Activated CD4-positive, alpha-beta T cell treated with anti-CD3 and anti-CD28 coated beads for 36 hours (primary cell): ENCODE measurements at regions of chr11 and their contacts with region 1.

Region 1: DNA sequence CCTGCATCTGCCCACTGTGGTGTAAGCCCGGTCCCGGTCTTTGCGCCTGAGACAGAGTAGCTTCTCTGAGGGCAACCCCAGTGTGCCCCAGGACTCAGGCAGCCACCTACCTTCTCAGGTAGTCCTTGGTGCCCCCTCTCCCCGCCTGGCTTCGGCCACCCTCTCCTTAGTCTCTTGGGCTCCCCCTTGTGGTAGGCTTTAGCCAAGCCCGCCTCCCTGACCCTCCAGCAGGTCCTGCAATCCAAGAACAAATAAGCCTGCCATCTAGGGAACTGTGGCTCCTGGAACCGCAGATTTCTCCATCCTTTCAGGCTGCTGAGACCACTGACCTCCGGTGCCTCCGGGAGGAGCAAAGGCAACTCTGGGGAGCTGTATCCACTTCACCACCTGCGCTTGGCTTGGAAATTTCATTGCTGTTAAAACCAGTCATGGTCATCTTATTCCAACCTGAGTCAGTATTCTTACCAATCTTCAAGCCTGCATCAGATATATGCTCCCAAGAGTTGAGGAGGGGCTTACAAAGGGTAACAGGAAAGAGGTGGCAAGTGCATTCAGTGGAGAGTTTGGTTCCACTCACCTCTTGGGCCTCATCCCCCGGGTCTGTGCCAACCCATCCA is 52.8 kb upstream of the TENM4 start:
- DNase-seq: peak; percentile 70
- ATAC-seq: no peak
- H3K4me3 Mint-ChIP-seq: no peak overlapping the region
- H3K27ac Mint-ChIP-seq: no peak overlapping the region
- H3K4me1 Mint-ChIP-seq: no peaks in the 10 kb centered on the region
- H3K27me3 Mint-ChIP-seq: peaks cover 5% of the 10 kb centered on the region

Region 2: GRCh38 chr11:79244241-79244772 is 249.4 kb before region 1 on chr11:
- CTCF ChIA-PET with region 1: no interaction called
- POLR2A ChIA-PET with region 1: interaction called, 12 read pairs
- intact Hi-C with region 1: no loop called
- DNase-seq: no peak
- ATAC-seq: no peak
- H3K4me3 Mint-ChIP-seq: no peak overlapping the region
- H3K27ac Mint-ChIP-seq: no peak overlapping the region
- H3K4me1 Mint-ChIP-seq: no peaks in the 10 kb centered on the region
- H3K27me3 Mint-ChIP-seq: no peaks in the 10 kb centered on the region

Region 3: GRCh38 chr11:79400717-79401686 is 92.7 kb before region 1 on chr11:
- CTCF ChIA-PET with region 1: interaction called, 3 read pairs
- POLR2A ChIA-PET with region 1: no interaction called
- intact Hi-C with region 1: loop called in 1 of 2 experiments (anchors 1 kb)
- DNase-seq: peak; percentile 40
- ATAC-seq: no peak
- H3K4me3 Mint-ChIP-seq: no peak overlapping the region
- H3K27ac Mint-ChIP-seq: no peak overlapping the region
- H3K4me1 Mint-ChIP-seq: no peaks in the 10 kb centered on the region
- H3K27me3 Mint-ChIP-seq: peaks cover 4% of the 10 kb centered on the region

Region 4: DNA sequence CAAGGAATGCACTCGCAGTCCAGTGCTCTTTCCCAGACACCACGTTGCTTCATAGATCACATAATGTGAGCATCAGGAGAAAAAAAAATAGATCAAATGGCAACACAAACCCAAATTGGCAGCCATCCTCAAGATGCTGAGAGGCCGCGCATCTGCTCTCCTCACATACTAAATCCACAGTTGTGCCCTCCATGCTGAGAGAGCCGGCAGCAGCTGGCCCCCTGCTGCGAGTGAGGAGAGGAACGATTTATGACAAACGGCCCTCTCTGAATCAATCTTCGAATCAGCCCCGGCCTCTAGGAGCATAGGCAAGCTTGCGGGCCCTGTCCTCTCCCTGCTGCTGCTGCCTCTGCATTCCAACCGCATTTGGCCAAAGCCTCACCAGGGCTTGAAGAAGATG is 107.0 kb after region 1 on chr11:
- CTCF ChIA-PET with region 1: no interaction called
- POLR2A ChIA-PET with region 1: no interaction called
- intact Hi-C with region 1: no loop called
- DNase-seq: no peak
- ATAC-seq: no peak
- H3K4me3 Mint-ChIP-seq: no peak overlapping the region
- H3K27ac Mint-ChIP-seq: no peak overlapping the region
- H3K4me1 Mint-ChIP-seq: no peaks in the 10 kb centered on the region
- H3K27me3 Mint-ChIP-seq: no peaks in the 10 kb centered on the region